ENCODE measurements at regions of chr1 and their contacts with region 1.

Region 1: DNA sequence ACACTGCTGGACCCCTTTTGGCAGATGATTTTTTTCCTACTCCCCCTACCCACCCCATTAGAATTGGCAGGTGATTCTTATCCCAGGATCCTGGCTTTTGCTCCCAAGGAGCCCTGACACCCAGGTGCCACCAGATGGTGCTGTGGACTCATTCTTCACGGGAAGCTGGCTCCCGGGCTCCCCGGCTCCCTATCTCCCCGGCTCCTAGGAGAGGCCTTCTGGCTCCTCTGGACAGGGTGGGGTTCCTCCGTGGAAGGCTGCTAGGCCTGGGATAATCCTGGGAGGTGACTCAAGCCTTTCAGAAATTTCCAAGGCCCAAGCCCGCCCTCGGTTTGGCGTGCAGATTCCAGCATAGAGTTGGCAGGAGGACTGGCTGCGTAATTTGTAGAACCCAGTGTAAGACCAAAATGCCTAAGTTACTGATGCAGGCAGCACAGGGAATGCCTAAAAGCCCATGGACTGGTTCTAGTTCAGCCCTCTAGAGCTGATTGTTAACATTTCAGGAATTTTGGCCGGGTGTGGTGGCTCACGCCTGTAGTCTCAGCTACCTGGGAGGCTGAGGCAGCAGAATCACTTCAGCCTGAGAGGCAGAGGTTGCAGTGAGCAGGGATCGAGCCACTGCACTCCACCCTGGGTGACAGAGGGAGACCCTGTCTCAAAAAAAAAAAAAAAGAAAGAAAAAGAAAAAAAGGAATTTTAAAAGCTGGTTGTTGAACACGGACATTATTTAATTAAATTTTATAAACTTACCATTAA is 6.8 kb upstream of the BSDC1 start:
- DNase-seq: peak; percentile 84
- ATAC-seq: peak; percentile 94
- H3K4me3 ChIP-seq: no peak overlapping the region
- H3K27ac ChIP-seq: no peak overlapping the region
- H3K4me1 ChIP-seq: peaks cover 3% of the 10 kb centered on the region; the same call in 1 of the 2 replicates
- H3K27me3 ChIP-seq: no peaks in the 10 kb centered on the region
- CTCF ChIP-seq: peak; percentile 91
- POLR2A ChIP-seq: 0 out of 2 replicates have a peak, but pooled peaks have one; percentile 32
- RAD21 ChIP-seq: peak; percentile 91

Region 2: GRCh38 chr1:32386676-32387392 is 14.2 kb before region 1 on chr1:
- CTCF ChIA-PET with region 1: no interaction called
- POLR2A ChIA-PET with region 1: no interaction called
- dilution Hi-C with region 1: no loop called
- in situ Hi-C with region 1: no loop called
- intact Hi-C with region 1: no loop called
- DNase-seq: no peak
- ATAC-seq: no peak
- H3K4me3 ChIP-seq: no peak overlapping the region
- H3K27ac ChIP-seq: no peak overlapping the region
- H3K4me1 ChIP-seq: no peaks in the 10 kb centered on the region
- H3K27me3 ChIP-seq: no peaks in the 10 kb centered on the region
- CTCF ChIP-seq: no peak
- POLR2A ChIP-seq: no peak
- RAD21 ChIP-seq: no peak

Region 3: GRCh38 chr1:32413507-32414185 is 12.6 kb after region 1 on chr1:
- CTCF ChIA-PET with region 1: interaction called, 15 read pairs
- POLR2A ChIA-PET with region 1: no interaction called
- dilution Hi-C with region 1: no loop called
- in situ Hi-C with region 1: no loop called
- intact Hi-C with region 1: loop called (anchors 1 kb)
- DNase-seq: peak; percentile 68
- ATAC-seq: peak; percentile 87
- H3K4me3 ChIP-seq: no peak overlapping the region
- H3K27ac ChIP-seq: no peak overlapping the region
- H3K4me1 ChIP-seq: no peaks in the 10 kb centered on the region
- H3K27me3 ChIP-seq: peaks cover 6% of the 10 kb centered on the region
- CTCF ChIP-seq: peak; percentile 77
- POLR2A ChIP-seq: no peak
- RAD21 ChIP-seq: peak; percentile 87

Region 4: GRCh38 chr1:32773018-32773763 is 372.1 kb after region 1 on chr1:
- CTCF ChIA-PET with region 1: no interaction called
- POLR2A ChIA-PET with region 1: no interaction called
- dilution Hi-C with region 1: no loop called
- in situ Hi-C with region 1: no loop called
- intact Hi-C with region 1: loop called (anchors 2 kb)
- DNase-seq: peak; percentile 74
- ATAC-seq: peak; percentile 80
- H3K4me3 ChIP-seq: no peak overlapping the region
- H3K27ac ChIP-seq: no peak overlapping the region
- H3K4me1 ChIP-seq: peaks cover 6% of the 10 kb centered on the region
- H3K27me3 ChIP-seq: no peaks in the 10 kb centered on the region
- CTCF ChIP-seq: peak; percentile 93
- POLR2A ChIP-seq: 0 out of 2 replicates have a peak, but pooled peaks have one; percentile 23
- RAD21 ChIP-seq: peak; percentile 90

Region 5: GRCh38 chr1:32876341-32877210 is 475.5 kb after region 1 on chr1:
- CTCF ChIA-PET with region 1: no interaction called
- POLR2A ChIA-PET with region 1: no interaction called
- dilution Hi-C with region 1: no loop called
- in situ Hi-C with region 1: no loop called
- intact Hi-C with region 1: loop called (anchors 2 kb)
- DNase-seq: no peak
- ATAC-seq: peak; percentile 58
- H3K4me3 ChIP-seq: no peak overlapping the region
- H3K27ac ChIP-seq: no peak overlapping the region
- H3K4me1 ChIP-seq: no peaks in the 10 kb centered on the region
- H3K27me3 ChIP-seq: peaks cover 23% of the 10 kb centered on the region
- CTCF ChIP-seq: peak; percentile 58
- POLR2A ChIP-seq: no peak
- RAD21 ChIP-seq: peak; percentile 51

Region 6: DNA sequence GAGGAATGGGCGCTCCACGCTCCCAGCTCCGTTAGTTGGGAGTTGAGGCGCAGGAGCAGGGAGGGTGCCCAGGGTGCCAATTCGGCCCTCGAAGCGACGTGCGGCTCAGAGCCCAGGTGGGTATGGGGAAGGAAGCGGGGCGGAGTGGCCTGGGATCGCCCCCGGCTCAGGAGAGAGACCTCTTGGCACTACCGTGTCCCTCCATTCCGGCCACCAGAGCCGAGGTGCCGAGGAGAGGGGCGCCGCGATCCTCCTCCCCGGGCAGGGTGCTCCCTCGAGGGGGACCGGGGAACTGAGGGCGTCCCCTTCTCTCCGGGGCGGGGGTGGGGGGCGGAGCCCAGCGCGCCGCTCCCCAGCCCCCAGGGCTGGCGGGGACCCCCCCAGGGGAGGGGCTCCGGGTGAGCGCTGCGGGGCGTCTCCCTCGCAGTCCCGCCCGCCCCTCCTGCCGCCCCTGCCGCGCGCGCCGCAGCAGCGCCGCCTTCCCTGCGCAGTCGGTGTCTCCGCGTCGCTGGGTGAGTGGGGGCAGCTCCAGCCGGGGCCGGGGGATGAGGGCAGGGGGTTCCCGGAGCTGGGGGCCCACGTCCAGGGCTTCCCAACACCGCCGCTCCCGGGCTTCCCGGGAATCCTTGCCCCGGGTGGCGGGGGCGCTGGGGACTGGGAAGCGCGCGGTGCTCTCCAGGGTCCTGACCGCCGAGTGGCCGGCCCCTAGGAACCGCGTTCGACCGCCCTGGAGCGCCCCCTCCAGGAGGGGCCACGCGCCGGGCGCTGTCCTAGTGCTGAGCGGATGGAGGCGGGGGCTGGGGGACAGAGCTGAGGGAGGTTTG is 485.2 kb after region 1 on chr1 and contains the start of gene HPCA:
- CTCF ChIA-PET with region 1: no interaction called
- POLR2A ChIA-PET with region 1: no interaction called
- dilution Hi-C with region 1: no loop called
- in situ Hi-C with region 1: no loop called
- intact Hi-C with region 1: loop called (anchors 5 kb)
- DNase-seq: peak; percentile 48
- ATAC-seq: peak; percentile 99
- H3K4me3 ChIP-seq: no peak within 1 kb of the TSS
- H3K27ac ChIP-seq: no peak within 1 kb of the TSS
- H3K4me1 ChIP-seq: no peaks in the 10 kb centered on the region
- H3K27me3 ChIP-seq: peaks cover 65% of the 10 kb centered on the region
- CTCF ChIP-seq: peak; percentile 91
- POLR2A ChIP-seq: no peak
- RAD21 ChIP-seq: peak; percentile 55
- total RNA-seq, gene HPCA: not detected in 2 replicates